CD4-positive, alpha-beta memory T cell (primary cell): ENCODE measurements at regions of chr2 and their contacts with region 1.

Region 1: GRCh38 chr2:206693399-206694137 is 24.6 kb downstream of the DYTN start:
- DNase-seq: peak in 4 of 5 donors; percentile 40 to 54 (median 50)
- H3K4me3 ChIP-seq: no peak overlapping the region
- H3K4me3 Mint-ChIP-seq: no peak overlapping the region
- H3K27ac ChIP-seq: no peak overlapping the region
- H3K27ac Mint-ChIP-seq: no peak overlapping the region
- H3K4me1 ChIP-seq: peaks cover 10% of the 10 kb centered on the region
- H3K4me1 Mint-ChIP-seq: peaks cover 0 to 4% (median 4%) of the 10 kb centered on the region in 4 donors
- H3K27me3 ChIP-seq: no peaks in the 10 kb centered on the region
- H3K27me3 Mint-ChIP-seq: peaks cover 2 to 5% of the 10 kb centered on the region in 2 donors

Region 2: GRCh38 chr2:206392118-206392517 is 301.4 kb before region 1 on chr2:
- CTCF ChIA-PET with region 1: no interaction called
- POLR2A ChIA-PET with region 1: no interaction called
- intact Hi-C with region 1: loop called (anchors 10 kb)
- DNase-seq: peak in 4 of 5 donors; percentile 11 to 23 (median 18)
- H3K4me3 ChIP-seq: no peak overlapping the region
- H3K4me3 Mint-ChIP-seq: no peak overlapping the region
- H3K27ac ChIP-seq: no peak overlapping the region
- H3K27ac Mint-ChIP-seq: no peak overlapping the region
- H3K4me1 ChIP-seq: no peaks in the 10 kb centered on the region
- H3K4me1 Mint-ChIP-seq: peaks cover 0 to 4% (median 0%) of the 10 kb centered on the region in 4 donors
- H3K27me3 ChIP-seq: no peaks in the 10 kb centered on the region
- H3K27me3 Mint-ChIP-seq: no peaks in the 10 kb centered on the region

Region 3: GRCh38 chr2:206721256-206721920 is 27.8 kb after region 1 on chr2:
- CTCF ChIA-PET with region 1: no interaction called
- POLR2A ChIA-PET with region 1: no interaction called
- intact Hi-C with region 1: no loop called
- DNase-seq: no peak
- H3K4me3 ChIP-seq: no peak overlapping the region
- H3K4me3 Mint-ChIP-seq: peak overlapping the region in 1 of 8 donors; percentile 0
- H3K27ac ChIP-seq: no peak overlapping the region
- H3K27ac Mint-ChIP-seq: no peak overlapping the region
- H3K4me1 ChIP-seq: no peaks in the 10 kb centered on the region
- H3K4me1 Mint-ChIP-seq: no peaks in the 10 kb centered on the region
- H3K27me3 ChIP-seq: no peaks in the 10 kb centered on the region
- H3K27me3 Mint-ChIP-seq: peaks cover 18 to 23% of the 10 kb centered on the region in 2 donors

Region 4: GRCh38 chr2:206783718-206784117 is 90.2 kb after region 1 on chr2:
- CTCF ChIA-PET with region 1: interaction called, 12 read pairs
- POLR2A ChIA-PET with region 1: no interaction called
- intact Hi-C with region 1: loop called (anchors 1 kb)
- DNase-seq: no peak
- H3K4me3 ChIP-seq: no peak overlapping the region
- H3K4me3 Mint-ChIP-seq: no peak overlapping the region
- H3K27ac ChIP-seq: no peak overlapping the region
- H3K27ac Mint-ChIP-seq: peak overlapping the region in 1 of 7 donors; percentile 17
- H3K4me1 ChIP-seq: no peaks in the 10 kb centered on the region
- H3K4me1 Mint-ChIP-seq: peaks cover 5 to 18% (median 15%) of the 10 kb centered on the region in 4 donors
- H3K27me3 ChIP-seq: no peaks in the 10 kb centered on the region
- H3K27me3 Mint-ChIP-seq: no peaks in the 10 kb centered on the region

Region 5: GRCh38 chr2:207143215-207144172 is 449.9 kb after region 1 on chr2:
- CTCF ChIA-PET with region 1: no interaction called
- POLR2A ChIA-PET with region 1: no interaction called
- intact Hi-C with region 1: loop called (anchors 10 kb)
- DNase-seq: peak; percentile 74 to 85 (median 77)
- H3K4me3 ChIP-seq: peak overlapping the region in 1 of 2 donors; percentile 15
- H3K4me3 Mint-ChIP-seq: peak overlapping the region; percentile 66 to 84 (median 74)
- H3K27ac ChIP-seq: peak overlapping the region; percentile 69
- H3K27ac Mint-ChIP-seq: peak overlapping the region; percentile 84 to 96 (median 93)
- H3K4me1 ChIP-seq: peaks cover 58% of the 10 kb centered on the region
- H3K4me1 Mint-ChIP-seq: peaks cover 48 to 81% (median 67%) of the 10 kb centered on the region in 4 donors
- H3K27me3 ChIP-seq: no peaks in the 10 kb centered on the region
- H3K27me3 Mint-ChIP-seq: no peaks in the 10 kb centered on the region

Region 6: GRCh38 chr2:207974216-207974605 is 1280.6 kb after region 1 on chr2:
- CTCF ChIA-PET with region 1: no interaction called
- POLR2A ChIA-PET with region 1: no interaction called
- intact Hi-C with region 1: loop called (anchors 5 kb)
- DNase-seq: no peak
- H3K4me3 ChIP-seq: no peak overlapping the region
- H3K4me3 Mint-ChIP-seq: no peak overlapping the region
- H3K27ac ChIP-seq: no peak overlapping the region
- H3K27ac Mint-ChIP-seq: no peak overlapping the region
- H3K4me1 ChIP-seq: no peaks in the 10 kb centered on the region
- H3K4me1 Mint-ChIP-seq: peaks cover 0 to 20% (median 5%) of the 10 kb centered on the region in 4 donors
- H3K27me3 ChIP-seq: no peaks in the 10 kb centered on the region
- H3K27me3 Mint-ChIP-seq: no peaks in the 10 kb centered on the region